Cardiac septum (tissue), 1 donor: ENCODE measurements at regions of chr4 and their contacts with region 1.

Region 1: DNA sequence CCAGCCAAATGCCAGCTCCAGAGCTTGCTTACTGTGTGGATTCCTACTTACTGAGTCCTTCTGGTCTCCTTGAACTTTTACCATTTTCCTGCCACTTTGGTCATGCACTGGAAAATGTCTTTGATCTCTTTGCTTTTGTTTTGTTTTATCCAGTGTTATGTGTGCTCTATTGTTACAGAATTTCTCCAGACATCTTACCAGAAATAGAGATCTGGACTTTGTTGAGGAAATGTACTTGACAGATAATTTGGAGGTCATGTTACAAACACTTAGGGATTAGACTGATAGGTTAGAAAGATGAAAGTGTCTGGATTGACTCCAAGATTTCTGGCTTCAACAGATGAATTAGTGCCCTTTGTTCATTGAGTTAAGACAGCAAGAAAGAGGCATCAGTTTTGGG is 5.7 kb upstream of the ZNF330 start:
- DNase-seq: no peak

Region 2: GRCh38 chr4:141158219-141158618 is 56.8 kb before region 1 on chr4:
- intact Hi-C with region 1: loop called (anchors 5 kb)
- DNase-seq: no peak